ENCODE measurements at regions of chr10 and their contacts with region 1.

Region 1: DNA sequence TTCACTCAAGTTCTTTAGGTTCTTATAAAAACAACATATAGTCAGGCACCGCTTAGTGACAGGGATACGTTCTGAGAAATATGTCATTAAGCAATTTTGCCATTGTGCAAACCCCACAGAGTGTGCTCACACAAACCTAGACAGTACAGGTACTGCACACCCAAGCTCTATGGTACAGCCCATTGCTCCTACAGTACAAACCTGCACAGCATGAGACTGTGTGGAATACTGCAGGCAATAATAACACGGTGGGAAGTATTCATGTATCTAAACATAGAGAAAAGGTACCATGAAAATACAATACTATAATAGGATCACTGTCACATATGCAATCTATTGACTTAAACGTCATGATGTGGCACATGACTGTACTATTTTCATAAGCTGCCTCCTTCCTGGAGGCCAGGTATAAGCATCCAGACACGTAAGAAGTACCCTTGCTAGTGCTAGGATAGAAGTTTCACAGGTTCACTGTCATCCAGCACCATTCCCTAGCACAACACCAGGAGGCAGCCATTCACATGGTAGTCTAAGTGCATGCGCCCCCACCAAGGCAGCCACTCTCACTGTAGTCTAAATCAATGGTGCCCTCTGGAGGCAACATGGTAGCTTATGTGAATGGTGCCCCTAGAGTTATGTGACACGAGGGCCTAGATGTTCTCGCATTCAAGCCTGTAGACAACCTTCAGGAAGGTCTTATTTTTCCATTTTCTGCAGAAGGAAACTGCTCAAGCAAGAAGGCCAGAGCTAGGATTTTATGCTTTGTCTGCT is 98.5 kb downstream of the ARHGAP22 start:
- ATAC-seq: peak in 3 of 8 experiments; percentile 26 to 66 (median 41)
- H3K4me3 ChIP-seq: no peak overlapping the region
- H3K27ac ChIP-seq: no peak overlapping the region
- H3K4me1 ChIP-seq: no peaks in the 10 kb centered on the region

Region 2: GRCh38 chr10:48444266-48444665 is 62.1 kb before region 1 on chr10:
- in situ Hi-C with region 1: loop called in 1 of 9 experiments (anchors 10 kb)
- ATAC-seq: peak in 3 of 8 experiments; percentile 36 to 41 (median 38)
- H3K4me3 ChIP-seq: no peak overlapping the region
- H3K27ac ChIP-seq: no peak overlapping the region
- H3K4me1 ChIP-seq: peaks cover 4 to 6% of the 10 kb centered on the region in 2 donors

Region 3: DNA sequence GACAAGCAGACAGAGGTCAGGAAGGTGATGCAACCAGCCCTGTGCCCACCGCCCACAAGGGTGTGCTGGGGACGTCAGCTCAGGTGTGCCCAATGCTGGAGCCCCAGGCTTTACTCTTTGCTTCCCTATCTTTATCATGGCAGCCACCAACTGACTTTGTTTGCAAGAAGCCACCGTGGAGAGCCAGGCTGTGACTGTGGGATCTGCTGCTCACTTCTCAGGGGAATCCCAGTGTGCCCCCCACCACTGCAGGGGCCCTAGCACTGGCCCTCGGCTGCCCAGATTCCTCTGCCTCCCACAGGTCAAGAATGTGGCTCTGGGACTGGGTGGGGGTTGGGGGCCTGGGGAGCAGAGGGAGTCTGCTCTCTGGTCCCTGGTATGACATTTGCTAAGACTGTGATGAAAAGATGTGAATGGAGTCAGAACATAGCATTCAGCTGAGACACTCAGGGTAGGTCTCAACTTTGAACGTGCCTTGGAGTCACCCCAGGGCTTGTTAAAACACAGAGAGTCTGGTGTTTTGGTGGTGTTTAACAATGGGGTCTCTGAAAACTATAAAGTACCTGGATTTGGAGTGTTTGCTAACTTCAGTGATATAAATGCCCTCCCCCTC is 51.3 kb after region 1 on chr10:
- in situ Hi-C with region 1: no loop called
- ATAC-seq: no peak
- H3K4me3 ChIP-seq: no peak overlapping the region
- H3K27ac ChIP-seq: no peak overlapping the region
- H3K4me1 ChIP-seq: no peaks in the 10 kb centered on the region

Region 4: DNA sequence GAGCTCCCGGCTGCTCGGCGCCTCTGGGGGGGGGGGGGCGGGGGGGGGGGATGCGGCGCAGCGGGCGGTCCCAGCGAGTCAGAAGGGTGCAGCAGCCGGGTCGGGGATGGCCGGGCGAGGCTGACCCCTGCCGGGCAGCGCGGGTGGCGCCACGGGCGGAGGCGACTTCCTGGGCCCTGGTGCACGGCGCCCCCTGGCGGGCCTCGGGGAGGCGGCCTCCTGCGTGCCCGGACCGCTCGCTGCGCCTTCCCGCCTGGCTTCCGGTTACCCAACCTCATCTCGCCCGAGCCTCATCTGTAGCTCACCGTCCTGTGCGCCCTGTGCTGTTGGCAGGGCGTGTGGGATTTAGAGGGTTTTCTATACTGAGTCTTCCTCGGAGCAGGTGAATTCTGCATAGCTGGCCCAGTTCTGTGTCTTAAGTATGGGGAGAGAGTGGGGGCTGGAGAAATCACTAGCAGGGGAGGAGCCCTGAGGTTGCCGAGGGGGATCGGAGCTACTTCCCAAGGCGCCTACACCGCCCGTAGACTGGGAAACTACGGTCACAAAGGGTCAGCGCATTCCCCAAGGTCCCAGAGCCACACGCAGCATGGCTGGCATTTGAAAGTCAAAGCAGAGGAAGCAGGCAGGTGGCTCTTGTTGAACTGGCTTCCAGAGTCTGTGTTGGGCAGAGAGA is 150.0 kb after region 1 on chr10:
- in situ Hi-C with region 1: no loop called
- ATAC-seq: peak; percentile 74 to 98 (median 96)
- H3K4me3 ChIP-seq: peak overlapping the region; percentile 23 to 36 (median 30)
- H3K27ac ChIP-seq: no peak overlapping the region
- H3K4me1 ChIP-seq: peaks cover 0 to 2% of the 10 kb centered on the region in 2 donors

Region 5: GRCh38 chr10:48670978-48671913 is 164.9 kb after region 1 on chr10:
- in situ Hi-C with region 1: no loop called
- ATAC-seq: peak in 4 of 8 experiments; percentile 57 to 96 (median 70)
- H3K4me3 ChIP-seq: no peak overlapping the region
- H3K27ac ChIP-seq: no peak overlapping the region
- H3K4me1 ChIP-seq: no peaks in the 10 kb centered on the region

Region 6: GRCh38 chr10:48934672-48935501 is 428.6 kb after region 1 on chr10:
- in situ Hi-C with region 1: no loop called
- ATAC-seq: peak in 7 of 8 experiments; percentile 41 to 94 (median 78)
- H3K4me3 ChIP-seq: no peak overlapping the region
- H3K27ac ChIP-seq: no peak overlapping the region
- H3K4me1 ChIP-seq: peaks cover 2 to 6% of the 10 kb centered on the region in 2 donors